Dorsolateral prefrontal cortex (tissue), 120 donors: ENCODE measurements at regions of chr10 and their contacts with region 1.

Region 1: GRCh38 chr10:24724381-24725228 is 918 bp upstream of the ARHGAP21 start:
- DNase-seq: peak; percentile 98 to 99 (median 99)
- H3K4me3 ChIP-seq: peak overlapping the region; percentile 63 to 93 (median 85)
- H3K27ac ChIP-seq: peak overlapping the region; percentile 92 to 100 (median 99)
- H3K27me3 ChIP-seq: no peaks in the 10 kb centered on the region
- CTCF ChIP-seq: peak in 7 of 56 donors; percentile 0 to 33 (median 9)

Region 2: DNA sequence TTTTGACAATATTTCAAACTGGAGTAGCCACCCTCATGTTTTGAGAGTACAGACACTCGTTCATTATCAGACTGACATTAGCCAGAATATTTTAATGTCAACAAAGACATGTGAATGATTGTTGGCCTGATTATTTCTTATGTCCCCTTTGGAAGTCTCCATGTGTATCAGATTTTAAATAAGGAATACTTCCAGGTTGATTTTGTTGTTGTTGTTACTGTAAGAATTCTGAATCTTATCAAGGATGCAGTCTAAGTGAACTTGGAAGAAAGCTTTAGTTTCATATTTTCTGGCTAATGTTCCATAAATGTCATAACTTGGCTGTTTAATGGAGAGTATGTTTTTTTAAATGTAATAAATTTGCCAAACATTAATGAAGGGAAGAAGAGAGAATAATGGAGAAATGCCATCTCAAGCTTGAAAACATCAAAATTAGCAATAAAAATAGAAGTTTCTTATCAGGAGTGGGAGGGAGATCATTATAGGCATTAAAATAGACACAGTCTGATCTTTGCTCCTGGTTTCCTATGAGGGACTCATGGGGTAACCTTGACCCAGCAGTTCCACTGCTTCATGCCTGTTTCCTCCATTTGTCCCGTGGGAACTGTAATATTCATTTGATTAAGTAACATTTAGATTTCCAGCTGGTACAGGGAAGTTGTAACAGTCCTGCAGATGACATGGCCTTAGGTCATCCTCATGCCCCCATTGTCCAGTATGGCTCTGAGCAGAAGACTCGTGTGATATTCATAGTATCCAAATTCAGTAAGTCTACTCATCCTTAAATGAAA is 638.1 kb before region 1 on chr10:
- intact Hi-C with region 1: no loop called
- DNase-seq: no peak
- H3K4me3 ChIP-seq: no peak overlapping the region
- H3K27ac ChIP-seq: no peak overlapping the region
- H3K27me3 ChIP-seq: no peaks in the 10 kb centered on the region
- CTCF ChIP-seq: no peak

Region 3: GRCh38 chr10:24642622-24643417 is 81.8 kb before region 1 on chr10:
- intact Hi-C with region 1: loop called (anchors 5 kb)
- DNase-seq: no peak
- H3K4me3 ChIP-seq: no peak overlapping the region
- H3K27ac ChIP-seq: peak overlapping the region in 26 of 59 donors; percentile 1 to 65 (median 24)
- H3K27me3 ChIP-seq: no peaks in the 10 kb centered on the region
- CTCF ChIP-seq: peak; percentile 49 to 88 (median 75)

Region 4: GRCh38 chr10:24793648-24794379 is 69.2 kb after region 1 on chr10:
- intact Hi-C with region 1: loop called in 1 of 2 experiments (anchors 5 kb)
- DNase-seq: peak in 2 of 10 donors; percentile 49 to 52
- H3K4me3 ChIP-seq: no peak overlapping the region
- H3K27ac ChIP-seq: peak overlapping the region in 53 of 59 donors; percentile 1 to 100 (median 72)
- H3K27me3 ChIP-seq: no peaks in the 10 kb centered on the region
- CTCF ChIP-seq: no peak

Region 5: GRCh38 chr10:24858288-24859270 is 134.0 kb after region 1 on chr10:
- intact Hi-C with region 1: loop called in 1 of 2 experiments (anchors 5 kb)
- DNase-seq: no peak
- H3K4me3 ChIP-seq: no peak overlapping the region
- H3K27ac ChIP-seq: peak overlapping the region in 50 of 59 donors; percentile 7 to 87 (median 76)
- H3K27me3 ChIP-seq: no peaks in the 10 kb centered on the region
- CTCF ChIP-seq: no peak

Region 6: DNA sequence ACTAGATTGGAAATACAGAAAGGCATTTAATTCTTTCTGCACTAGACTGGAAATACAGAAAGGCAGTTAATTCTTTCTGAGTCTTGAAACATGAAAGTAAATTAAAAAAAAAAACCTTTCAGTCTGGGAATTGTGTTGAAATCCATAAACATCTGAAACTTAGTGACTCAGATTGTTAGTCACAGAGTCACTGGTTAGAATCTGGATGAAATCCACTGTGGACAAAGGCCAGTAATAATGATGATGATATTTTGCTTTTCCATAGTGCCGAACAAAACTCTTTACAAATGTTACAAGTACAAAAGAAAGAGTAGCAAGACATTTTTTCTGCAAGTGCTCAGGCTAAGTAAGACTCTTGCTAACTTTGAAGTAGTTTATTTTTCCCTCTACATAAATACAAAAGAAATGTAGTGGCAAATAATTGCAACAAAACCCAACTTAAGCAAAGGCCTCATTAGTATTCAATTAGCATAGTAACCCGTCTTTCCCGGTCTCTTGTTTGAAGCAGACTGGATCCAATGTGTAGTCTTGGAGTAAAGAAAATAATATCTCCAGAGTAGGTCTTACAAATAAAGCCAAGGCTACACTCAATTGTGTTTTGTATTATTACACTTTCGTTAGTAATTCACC is 233.6 kb after region 1 on chr10:
- intact Hi-C with region 1: loop called (anchors 2 kb)
- DNase-seq: no peak
- H3K4me3 ChIP-seq: peak overlapping the region in 57 of 59 donors; percentile 2 to 60 (median 34)
- H3K27ac ChIP-seq: peak overlapping the region; percentile 53 to 100 (median 93)
- H3K27me3 ChIP-seq: no peaks in the 10 kb centered on the region
- CTCF ChIP-seq: peak in 1 of 56 donors; percentile 4

Region 7: DNA sequence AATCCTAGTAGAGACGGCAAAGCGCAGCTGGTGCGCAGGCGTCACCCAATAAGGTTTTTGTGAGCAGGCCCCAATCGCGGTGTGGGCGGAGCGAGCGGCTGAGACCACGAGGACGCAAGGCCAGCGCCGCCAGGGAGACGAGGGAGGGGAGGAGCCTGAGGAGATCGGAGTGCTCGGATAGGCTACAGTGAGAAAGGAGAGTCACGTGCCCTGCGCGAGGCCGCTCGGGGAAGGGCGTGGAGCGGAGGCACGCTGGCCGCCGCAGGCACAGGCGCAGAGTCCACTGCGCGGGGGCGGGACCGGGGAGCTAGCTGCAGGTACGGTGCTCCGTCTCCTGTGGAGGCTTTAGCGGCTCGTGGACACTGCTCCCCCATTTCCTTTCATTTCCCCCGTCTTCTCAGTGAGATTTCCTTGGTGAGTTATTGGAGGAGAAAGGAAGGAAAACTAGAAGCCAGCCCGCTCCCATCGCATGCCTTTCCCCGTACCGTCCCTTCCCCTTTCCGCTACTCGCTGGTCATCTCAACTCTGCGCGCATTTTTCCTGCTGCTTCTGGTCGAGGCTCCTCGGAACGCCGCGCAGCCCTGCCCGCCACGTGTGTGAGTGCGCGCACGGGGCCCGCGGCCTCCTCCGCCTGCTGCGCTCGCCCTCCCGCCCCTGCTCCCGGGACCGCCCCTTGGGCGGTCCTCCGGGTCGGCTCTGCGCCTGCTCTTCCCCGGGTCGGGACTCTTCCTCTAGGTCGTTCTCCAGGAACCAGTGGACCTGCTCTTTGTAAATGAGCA is 292.0 kb after region 1 on chr10 and contains the start of gene THNSL1:
- intact Hi-C with region 1: loop called (anchors 1 to 5 kb)
- DNase-seq: peak; percentile 95 to 99 (median 98)
- H3K4me3 ChIP-seq: peak within 1 kb of the TSS; percentile 60 to 92 (median 81)
- H3K27ac ChIP-seq: peak within 1 kb of the TSS; percentile 63 to 98 (median 94)
- H3K27me3 ChIP-seq: no peaks in the 10 kb centered on the region
- CTCF ChIP-seq: peak in 19 of 56 donors; percentile 7 to 33 (median 23)
- total RNA-seq, gene THNSL1: 5.6 to 16.0 (median 10.5) TPM